Activated CD8-positive, alpha-beta T cell treated with anti-CD3 and anti-CD28 coated beads for 36 hours (primary cell): ENCODE measurements at regions of chrX and their contacts with region 1.

Region 1: DNA sequence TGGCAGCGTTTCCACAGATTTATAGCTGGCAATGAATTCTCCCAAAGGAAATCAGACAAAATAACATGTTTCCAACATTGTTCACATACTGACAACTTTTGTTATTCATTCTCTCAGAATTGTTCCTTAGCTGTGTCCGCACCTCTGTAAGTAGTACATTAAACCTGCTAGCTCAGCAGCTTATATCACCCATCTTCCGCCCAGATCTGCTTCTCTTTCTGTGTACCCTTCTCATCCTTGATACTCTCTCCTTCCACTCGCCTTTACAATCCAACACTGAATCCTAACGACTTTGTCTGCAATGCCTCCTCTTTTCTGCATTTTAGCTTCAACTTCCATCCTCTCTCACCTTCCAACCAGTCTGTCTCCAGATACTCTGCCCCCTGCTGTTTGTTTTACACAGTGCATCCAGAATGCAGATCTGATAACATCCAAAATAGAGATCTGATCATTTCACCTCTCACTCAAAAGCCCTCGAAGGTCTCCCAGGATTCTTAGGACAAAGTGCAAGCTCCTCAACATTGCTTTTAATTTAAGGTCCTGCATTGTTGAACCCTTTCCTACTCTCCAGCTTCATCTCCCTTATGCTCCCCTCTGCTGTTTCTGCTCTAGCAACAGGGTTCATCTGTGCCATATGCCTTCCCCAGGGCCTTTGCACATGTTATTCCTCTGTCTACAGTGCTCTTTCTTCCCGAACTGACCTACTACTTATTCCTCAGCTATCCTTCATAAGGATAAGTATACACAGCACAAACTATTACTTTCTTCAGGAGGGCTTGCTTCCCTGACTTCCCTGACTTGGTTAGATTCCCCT is 67.3 kb upstream of the VBP1 start:
- DNase-seq: peak; percentile 50
- ATAC-seq: no peak
- H3K4me3 Mint-ChIP-seq: no peak overlapping the region
- H3K27ac Mint-ChIP-seq: no peak overlapping the region
- H3K4me1 Mint-ChIP-seq: peaks cover 6% of the 10 kb centered on the region
- H3K27me3 Mint-ChIP-seq: no peaks in the 10 kb centered on the region
- CTCF ChIP-seq: no peak

Region 2: GRCh38 chrX:154980330-154981096 is 168.4 kb before region 1 on chrX:
- CTCF ChIA-PET with region 1: interaction called, 8 read pairs
- POLR2A ChIA-PET with region 1: no interaction called
- intact Hi-C with region 1: loop called (anchors 10 kb)
- DNase-seq: peak; percentile 87
- ATAC-seq: peak; percentile 99
- H3K4me3 Mint-ChIP-seq: peak overlapping the region; percentile 73
- H3K27ac Mint-ChIP-seq: peak overlapping the region; percentile 76
- H3K4me1 Mint-ChIP-seq: peaks cover 5% of the 10 kb centered on the region
- H3K27me3 Mint-ChIP-seq: no peaks in the 10 kb centered on the region
- CTCF ChIP-seq: peak; percentile 47

Region 3: DNA sequence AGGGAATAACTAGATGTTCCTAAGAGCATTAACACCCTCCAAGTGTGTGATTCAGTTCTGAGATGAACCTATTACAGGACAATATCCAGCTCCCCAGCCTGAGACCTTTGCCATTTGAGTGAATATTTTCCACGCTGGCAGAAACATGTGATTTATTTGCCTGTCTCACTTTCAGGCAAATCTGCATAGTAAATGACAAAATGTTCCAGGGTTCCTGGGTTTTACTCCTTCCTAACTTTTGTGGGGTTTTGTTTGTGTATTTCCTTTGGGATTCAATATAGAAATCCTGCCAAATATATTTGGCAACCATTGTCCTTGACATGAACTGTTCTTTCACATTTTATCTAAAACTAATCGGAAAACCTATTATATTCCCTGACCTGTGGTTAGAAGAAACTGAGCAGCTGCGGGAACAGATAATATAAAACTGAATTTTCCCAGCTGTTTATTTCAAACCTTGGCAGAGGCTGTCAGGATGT is 138.9 kb before region 1 on chrX:
- CTCF ChIA-PET with region 1: no interaction called
- POLR2A ChIA-PET with region 1: no interaction called
- intact Hi-C with region 1: no loop called
- DNase-seq: no peak
- ATAC-seq: no peak
- H3K4me3 Mint-ChIP-seq: no peak overlapping the region
- H3K27ac Mint-ChIP-seq: no peak overlapping the region
- H3K4me1 Mint-ChIP-seq: no peaks in the 10 kb centered on the region
- H3K27me3 Mint-ChIP-seq: no peaks in the 10 kb centered on the region
- CTCF ChIP-seq: no peak

Region 4: DNA sequence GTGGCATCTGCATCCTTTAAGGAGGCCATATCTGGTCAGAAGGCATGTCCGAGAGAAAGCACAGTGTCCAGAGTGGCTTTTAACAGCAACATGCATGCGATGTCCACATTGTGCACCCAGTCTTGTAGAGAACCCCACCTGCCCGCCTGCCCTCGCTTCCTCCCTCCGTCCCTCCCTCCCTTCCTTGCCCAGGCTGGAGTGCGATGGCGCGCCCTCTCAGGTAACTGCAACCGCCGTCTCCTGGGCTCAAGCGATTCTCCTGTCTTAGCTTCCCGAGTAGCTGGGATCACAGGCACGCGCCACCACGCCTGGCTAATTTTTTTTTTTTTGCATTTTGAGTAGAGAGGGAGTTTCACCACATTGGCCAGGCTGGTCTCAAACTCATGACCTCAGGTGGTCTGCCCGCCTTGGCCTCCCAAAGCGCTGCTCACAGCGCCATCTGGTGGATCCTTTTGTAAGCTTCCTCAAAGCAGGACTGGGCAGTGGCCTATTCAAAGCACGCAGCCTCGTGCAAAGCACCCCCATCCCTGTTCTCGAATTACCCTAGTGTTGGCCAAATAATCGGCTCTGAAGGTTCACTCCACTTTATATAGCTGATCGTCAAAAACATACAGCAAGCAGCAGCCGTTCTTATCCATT is 62.6 kb before region 1 on chrX:
- CTCF ChIA-PET with region 1: no interaction called
- POLR2A ChIA-PET with region 1: no interaction called
- intact Hi-C with region 1: no loop called
- DNase-seq: peak; percentile 56
- ATAC-seq: no peak
- H3K4me3 Mint-ChIP-seq: no peak overlapping the region
- H3K27ac Mint-ChIP-seq: no peak overlapping the region
- H3K4me1 Mint-ChIP-seq: peaks cover 10% of the 10 kb centered on the region
- H3K27me3 Mint-ChIP-seq: no peaks in the 10 kb centered on the region
- CTCF ChIP-seq: peak; percentile 42

Region 5: DNA sequence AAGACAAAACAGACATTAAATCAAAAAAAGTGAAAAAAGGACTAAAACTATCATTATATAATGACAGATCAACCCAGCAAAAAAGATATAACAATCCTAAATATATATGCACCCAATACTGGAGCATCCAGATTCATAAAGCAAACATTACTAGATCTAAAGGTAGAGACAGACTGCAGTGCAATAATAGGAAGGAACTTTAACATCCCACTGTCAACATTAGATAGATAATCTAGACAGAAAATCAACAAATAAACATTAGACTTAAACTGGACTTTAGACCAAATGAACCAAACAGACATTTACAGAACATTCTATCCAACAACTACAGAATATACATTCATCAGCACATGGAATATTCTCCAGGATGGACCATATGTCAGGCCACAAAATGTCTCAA is 144.8 kb after region 1 on chrX:
- CTCF ChIA-PET with region 1: no interaction called
- POLR2A ChIA-PET with region 1: no interaction called
- intact Hi-C with region 1: no loop called
- DNase-seq: no peak
- ATAC-seq: no peak
- H3K4me3 Mint-ChIP-seq: no peak overlapping the region
- H3K27ac Mint-ChIP-seq: no peak overlapping the region
- H3K4me1 Mint-ChIP-seq: no peaks in the 10 kb centered on the region
- H3K27me3 Mint-ChIP-seq: no peaks in the 10 kb centered on the region
- CTCF ChIP-seq: no peak